B cell (primary cell): ENCODE measurements at regions of chr6 and their contacts with region 1.

Region 1: DNA sequence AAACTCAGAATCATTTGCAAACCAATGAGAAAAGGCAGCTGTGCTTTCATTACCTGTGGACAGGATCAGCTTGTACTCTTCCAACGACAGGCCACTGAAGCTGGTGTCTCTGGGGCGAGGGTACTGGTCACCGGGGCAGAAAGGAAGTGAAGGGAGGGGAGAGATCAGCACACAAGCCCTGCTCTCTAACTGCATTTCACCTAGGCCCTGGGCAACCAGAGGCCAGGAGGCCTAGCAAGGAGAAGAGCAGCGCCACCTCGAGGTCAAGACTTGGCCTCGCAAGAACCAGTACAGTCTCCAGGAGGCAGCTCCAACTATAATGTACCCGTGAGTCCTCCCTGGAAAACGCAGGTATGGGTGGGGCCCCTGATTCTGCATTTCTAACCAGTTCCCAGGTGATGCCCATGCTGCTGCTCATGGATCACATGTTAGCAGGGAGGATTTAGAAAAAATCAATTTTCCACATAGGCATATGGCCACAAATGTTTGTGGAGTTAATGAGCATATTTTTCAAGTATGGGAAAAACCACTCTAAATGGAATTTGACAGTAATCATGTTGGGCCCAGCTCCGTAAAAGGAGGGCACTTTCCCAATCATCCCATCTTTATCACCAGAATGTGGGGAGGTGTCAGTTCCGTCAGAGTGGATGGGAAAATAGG is 11.0 kb downstream of the UQCC2 start:
- DNase-seq: peak; percentile 86
- ATAC-seq: peak; percentile 64
- H3K4me3 ChIP-seq: no peak overlapping the region
- H3K4me3 Mint-ChIP-seq: peak overlapping the region; percentile 21
- H3K27ac ChIP-seq: peak overlapping the region in 1 of 2 donors; percentile 17
- H3K27ac Mint-ChIP-seq: peak overlapping the region; percentile 82
- H3K4me1 ChIP-seq: peaks cover 53 to 57% of the 10 kb centered on the region in 2 donors
- H3K4me1 Mint-ChIP-seq: peaks cover 66% of the 10 kb centered on the region
- H3K27me3 ChIP-seq: no peaks in the 10 kb centered on the region
- H3K27me3 Mint-ChIP-seq: no peaks in the 10 kb centered on the region
- CTCF ChIP-seq: peak; percentile 81

Region 2: DNA sequence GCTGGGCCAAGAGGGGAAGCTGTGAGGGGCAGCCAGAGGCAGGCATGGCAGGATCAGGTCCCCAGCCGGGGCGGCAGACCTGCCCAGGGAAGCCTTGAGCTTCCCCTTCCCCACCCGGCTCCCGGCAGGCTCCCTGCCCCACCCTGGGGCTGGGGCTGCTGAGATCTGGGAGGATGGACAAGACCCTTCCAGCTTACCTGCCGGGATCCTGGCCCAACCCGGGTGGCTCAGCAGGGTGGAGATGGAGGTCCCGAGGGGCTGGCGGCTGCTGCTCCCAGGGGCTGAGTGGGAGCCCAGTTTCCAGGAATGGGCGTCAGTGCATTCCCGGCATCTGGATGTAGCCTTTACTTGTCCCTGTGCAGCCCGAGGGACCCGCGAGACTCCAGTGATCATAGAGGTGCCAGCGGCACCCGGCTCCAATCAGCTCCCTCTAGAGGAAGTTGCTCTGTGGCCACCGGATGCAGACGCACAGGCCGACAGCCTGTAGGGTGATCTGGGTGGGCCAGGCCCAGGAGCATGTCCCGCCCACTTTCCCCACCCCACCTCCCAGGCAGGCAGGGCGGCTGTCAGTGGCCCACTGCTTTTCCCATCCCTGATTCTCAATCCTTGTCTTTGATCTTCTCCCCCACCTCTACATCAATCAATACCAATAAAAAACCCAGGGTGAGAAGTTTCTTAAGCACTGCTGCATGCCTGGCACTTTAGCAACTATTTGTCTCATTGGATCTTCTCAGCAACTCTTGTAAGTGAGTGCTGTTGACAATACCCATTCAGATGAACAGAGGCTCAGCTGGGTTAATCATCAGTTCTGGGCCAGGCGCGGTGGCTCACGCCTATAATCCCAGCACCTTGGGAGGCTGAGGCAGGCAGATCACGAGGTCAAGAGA is 120.5 kb before region 1 on chr6 and contains the start of gene BAK1:
- CTCF ChIA-PET with region 1: interaction called, 213 read pairs
- POLR2A ChIA-PET with region 1: interaction called, 5 read pairs
- intact Hi-C with region 1: loop called (anchors 1 kb)
- DNase-seq: peak; percentile 89
- ATAC-seq: peak; percentile 98
- H3K4me3 ChIP-seq: peak within 1 kb of the TSS; percentile 65 to 87 (median 71)
- H3K4me3 Mint-ChIP-seq: peak within 1 kb of the TSS; percentile 95
- H3K27ac ChIP-seq: peak within 1 kb of the TSS; percentile 73 to 89
- H3K27ac Mint-ChIP-seq: peak within 1 kb of the TSS; percentile 95
- H3K4me1 ChIP-seq: peaks cover 23 to 39% of the 10 kb centered on the region in 2 donors
- H3K4me1 Mint-ChIP-seq: peaks cover 35% of the 10 kb centered on the region
- H3K27me3 ChIP-seq: no peaks in the 10 kb centered on the region
- H3K27me3 Mint-ChIP-seq: no peaks in the 10 kb centered on the region
- CTCF ChIP-seq: peak; percentile 56
- total RNA-seq, gene BAK1: 22.6 and 23.3 TPM in 2 replicates

Region 3: DNA sequence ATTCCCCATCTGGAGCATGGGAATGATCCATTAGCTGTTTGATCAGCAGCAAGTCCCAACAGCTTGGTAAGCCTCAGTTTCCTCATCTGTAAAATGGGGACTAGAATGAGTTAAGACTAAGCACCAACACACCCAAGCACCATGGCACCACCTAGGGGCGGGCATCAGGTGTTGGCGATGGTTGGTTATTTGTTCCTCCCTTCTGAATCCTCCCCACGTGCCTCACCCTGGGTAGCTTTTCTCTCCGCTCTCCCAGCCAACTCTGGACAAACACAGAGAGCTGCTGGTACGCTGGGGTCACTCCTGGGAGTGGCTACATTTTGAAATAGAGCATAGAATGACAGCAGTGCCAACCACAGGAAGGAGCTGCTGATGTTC is 92.7 kb before region 1 on chr6:
- CTCF ChIA-PET with region 1: interaction called, 43 read pairs
- POLR2A ChIA-PET with region 1: no interaction called
- intact Hi-C with region 1: no loop called
- DNase-seq: peak; percentile 70
- ATAC-seq: peak; percentile 87
- H3K4me3 ChIP-seq: no peak overlapping the region
- H3K4me3 Mint-ChIP-seq: no peak overlapping the region
- H3K27ac ChIP-seq: no peak overlapping the region
- H3K27ac Mint-ChIP-seq: no peak overlapping the region
- H3K4me1 ChIP-seq: peaks cover 7 to 23% of the 10 kb centered on the region in 2 donors
- H3K4me1 Mint-ChIP-seq: peaks cover 30% of the 10 kb centered on the region
- H3K27me3 ChIP-seq: no peaks in the 10 kb centered on the region
- H3K27me3 Mint-ChIP-seq: no peaks in the 10 kb centered on the region
- CTCF ChIP-seq: peak; percentile 74

Region 4: DNA sequence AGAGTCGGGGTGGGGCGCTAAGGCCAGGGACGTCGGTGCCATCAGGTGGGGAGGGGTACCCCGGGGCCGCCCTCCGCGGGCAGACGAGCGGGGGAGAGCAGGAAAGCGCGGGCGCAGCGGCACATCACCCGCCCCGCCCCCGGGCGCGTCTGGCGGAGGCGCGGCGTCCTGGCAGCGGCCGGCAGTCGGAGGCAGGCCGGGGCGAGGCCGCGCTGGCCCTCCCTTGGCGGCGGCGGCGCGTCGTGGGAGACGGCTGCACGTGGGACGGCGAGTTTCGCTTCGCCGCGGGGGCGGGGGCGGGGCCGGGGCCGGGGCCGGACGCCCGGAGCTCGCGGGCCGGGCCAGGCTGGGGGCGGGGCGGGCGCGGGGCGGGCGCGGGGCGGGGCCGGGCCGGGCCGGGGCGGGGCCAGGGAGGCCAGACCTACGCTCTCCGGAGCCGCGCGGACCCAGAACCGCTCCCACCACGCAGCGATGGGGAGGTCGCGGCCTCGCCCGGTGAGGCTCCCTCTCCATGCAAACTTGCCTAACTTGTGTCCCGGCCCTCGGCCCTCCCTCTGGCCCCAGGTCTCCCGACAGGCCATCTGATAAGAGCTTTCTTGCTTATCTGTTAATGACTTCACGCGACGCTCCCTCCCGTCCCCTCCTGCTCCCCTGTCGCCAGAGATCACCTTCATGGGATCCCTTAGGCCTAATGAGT is 66.9 kb before region 1 on chr6:
- CTCF ChIA-PET with region 1: interaction called, 6 read pairs
- POLR2A ChIA-PET with region 1: interaction called, 3 read pairs
- intact Hi-C with region 1: loop called (anchors 5 kb)
- DNase-seq: peak; percentile 79
- ATAC-seq: peak; percentile 92
- H3K4me3 ChIP-seq: peak overlapping the region in 4 of 5 experiments; percentile 25 to 58 (median 53)
- H3K4me3 Mint-ChIP-seq: peak overlapping the region; percentile 94
- H3K27ac ChIP-seq: peak overlapping the region in 1 of 2 donors; percentile 33
- H3K27ac Mint-ChIP-seq: peak overlapping the region; percentile 85
- H3K4me1 ChIP-seq: peaks cover 17 to 29% of the 10 kb centered on the region in 2 donors
- H3K4me1 Mint-ChIP-seq: peaks cover 50% of the 10 kb centered on the region
- H3K27me3 ChIP-seq: no peaks in the 10 kb centered on the region
- H3K27me3 Mint-ChIP-seq: no peaks in the 10 kb centered on the region
- CTCF ChIP-seq: no peak

Region 5: GRCh38 chr6:33683051-33683571 is 17.4 kb before region 1 on chr6:
- CTCF ChIA-PET with region 1: interaction called, 10 read pairs
- POLR2A ChIA-PET with region 1: interaction called, 5 read pairs
- intact Hi-C with region 1: no loop called
- DNase-seq: no peak
- ATAC-seq: no peak
- H3K4me3 ChIP-seq: no peak overlapping the region
- H3K4me3 Mint-ChIP-seq: no peak overlapping the region
- H3K27ac ChIP-seq: no peak overlapping the region
- H3K27ac Mint-ChIP-seq: no peak overlapping the region
- H3K4me1 ChIP-seq: peaks cover 0 to 8% of the 10 kb centered on the region in 2 donors
- H3K4me1 Mint-ChIP-seq: peaks cover 8% of the 10 kb centered on the region
- H3K27me3 ChIP-seq: no peaks in the 10 kb centered on the region
- H3K27me3 Mint-ChIP-seq: no peaks in the 10 kb centered on the region
- CTCF ChIP-seq: no peak

Region 6: GRCh38 chr6:33744001-33744848 is 43.7 kb after region 1 on chr6:
- CTCF ChIA-PET with region 1: interaction called, 11 read pairs
- POLR2A ChIA-PET with region 1: no interaction called
- intact Hi-C with region 1: no loop called
- DNase-seq: peak; percentile 81
- ATAC-seq: peak; percentile 81
- H3K4me3 ChIP-seq: no peak overlapping the region
- H3K4me3 Mint-ChIP-seq: no peak overlapping the region
- H3K27ac ChIP-seq: no peak overlapping the region
- H3K27ac Mint-ChIP-seq: peak overlapping the region; percentile 23
- H3K4me1 ChIP-seq: peaks cover 0 to 3% of the 10 kb centered on the region in 2 donors
- H3K4me1 Mint-ChIP-seq: peaks cover 3% of the 10 kb centered on the region
- H3K27me3 ChIP-seq: peaks cover 0 to 9% (median under 1%) of the 10 kb centered on the region in 4 experiments
- H3K27me3 Mint-ChIP-seq: peaks cover 24% of the 10 kb centered on the region
- CTCF ChIP-seq: peak; percentile 86